GM10248 (cell line): ENCODE measurements at regions of chr7 and their contacts with region 1.

Region 1: DNA sequence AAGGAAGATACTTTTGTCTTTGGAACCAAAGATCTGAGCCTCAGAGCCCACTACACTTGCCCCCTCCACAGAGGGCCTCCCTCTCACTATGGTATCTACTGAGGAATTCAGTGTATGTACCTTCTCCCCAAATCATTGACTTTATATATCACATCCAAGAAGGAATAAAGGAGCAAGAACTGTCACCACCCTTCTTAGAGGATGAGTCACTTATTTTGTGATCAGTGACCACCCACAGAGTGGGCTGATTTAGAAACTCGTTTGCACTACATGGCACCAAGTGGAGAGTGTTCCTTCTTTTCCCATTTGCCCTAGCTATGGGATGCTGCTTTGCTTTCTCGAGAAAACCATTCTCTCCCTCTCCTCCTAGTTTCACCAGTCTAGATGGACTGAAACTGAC is 5.7 kb downstream of the TMEM243 start:
- DNase-seq: no peak
- CTCF ChIP-seq: no peak

Region 2: DNA sequence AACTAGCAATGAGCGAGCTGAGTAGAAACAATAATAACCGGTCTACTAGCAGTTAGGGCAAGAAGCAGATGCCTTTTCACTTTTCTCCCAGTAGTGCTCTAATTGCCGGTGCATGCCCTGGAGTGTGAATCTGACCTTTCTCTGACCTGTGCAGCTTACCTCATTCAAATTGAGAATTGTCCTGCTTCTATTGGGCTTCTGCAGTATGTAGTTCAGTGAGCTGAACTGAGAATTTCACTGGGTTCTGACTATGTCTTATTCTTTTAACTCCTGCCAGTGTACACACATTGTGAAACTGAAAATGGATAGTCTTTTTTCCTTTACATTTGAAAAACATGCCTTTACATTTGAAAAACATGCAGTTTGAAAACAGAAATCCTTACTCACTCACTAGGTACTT is 728.0 kb before region 1 on chr7:
- CTCF ChIA-PET with region 1: no interaction called
- POLR2A ChIA-PET with region 1: no interaction called
- DNase-seq: peak; percentile 18
- CTCF ChIP-seq: no peak

Region 3: GRCh38 chr7:87202705-87203104 is 11.1 kb before region 1 on chr7:
- CTCF ChIA-PET with region 1: interaction called, 27 read pairs
- POLR2A ChIA-PET with region 1: interaction called, 4 read pairs
- DNase-seq: no peak
- CTCF ChIP-seq: no peak